RWPE1 (cell line): ENCODE measurements at regions of chr16 and their contacts with region 1.

Region 1: GRCh38 chr16:4392382-4393239 is 21.0 kb downstream of the VASN start:
- DNase-seq: peak; percentile 79
- H3K27ac ChIP-seq: peak overlapping the region; percentile 95
- CTCF ChIP-seq: no peak

Region 2: GRCh38 chr16:4358831-4359561 is 33.6 kb before region 1 on chr16:
- CTCF ChIA-PET with region 1: interaction called, 20 read pairs
- POLR2A ChIA-PET with region 1: no interaction called
- DNase-seq: peak; percentile 46
- H3K27ac ChIP-seq: peak overlapping the region; percentile 22; the same call in 1 of the 2 replicates
- CTCF ChIP-seq: peak; percentile 87